GM10248 (cell line): ENCODE measurements at regions of chr10 and their contacts with region 1.

Region 1: GRCh38 chr10:13987446-13987845 is 343.3 kb downstream of the FRMD4A start:
- DNase-seq: no peak
- CTCF ChIP-seq: no peak

Region 2: DNA sequence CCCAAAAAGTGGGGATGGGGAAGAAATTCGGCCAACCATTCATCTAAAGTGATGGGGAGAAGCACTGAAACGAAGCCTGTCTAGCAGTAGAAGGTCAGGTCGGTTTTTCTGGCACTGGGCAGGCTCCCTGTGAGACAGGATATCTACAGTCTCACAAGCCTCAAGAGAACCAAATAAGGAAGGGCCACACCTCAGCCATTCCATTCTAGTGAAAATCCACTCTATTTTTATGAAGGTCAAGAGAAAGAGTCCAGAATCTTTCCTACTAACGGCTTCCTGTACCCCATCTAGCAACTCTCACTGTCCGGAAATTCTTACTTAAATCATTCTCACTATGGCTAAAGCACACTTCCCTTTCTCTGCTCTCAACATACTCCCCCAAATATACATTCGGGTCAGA is 133.6 kb before region 1 on chr10:
- CTCF ChIA-PET with region 1: no interaction called
- POLR2A ChIA-PET with region 1: no interaction called
- DNase-seq: no peak
- CTCF ChIP-seq: no peak

Region 3: GRCh38 chr10:13971601-13972475 is 15.6 kb before region 1 on chr10:
- CTCF ChIA-PET with region 1: interaction called, 14 read pairs
- POLR2A ChIA-PET with region 1: no interaction called
- DNase-seq: no peak
- CTCF ChIP-seq: no peak

Region 4: GRCh38 chr10:14009371-14010100 is 22.1 kb after region 1 on chr10:
- CTCF ChIA-PET with region 1: no interaction called
- POLR2A ChIA-PET with region 1: no interaction called
- DNase-seq: peak; percentile 28
- CTCF ChIP-seq: no peak

Region 5: DNA sequence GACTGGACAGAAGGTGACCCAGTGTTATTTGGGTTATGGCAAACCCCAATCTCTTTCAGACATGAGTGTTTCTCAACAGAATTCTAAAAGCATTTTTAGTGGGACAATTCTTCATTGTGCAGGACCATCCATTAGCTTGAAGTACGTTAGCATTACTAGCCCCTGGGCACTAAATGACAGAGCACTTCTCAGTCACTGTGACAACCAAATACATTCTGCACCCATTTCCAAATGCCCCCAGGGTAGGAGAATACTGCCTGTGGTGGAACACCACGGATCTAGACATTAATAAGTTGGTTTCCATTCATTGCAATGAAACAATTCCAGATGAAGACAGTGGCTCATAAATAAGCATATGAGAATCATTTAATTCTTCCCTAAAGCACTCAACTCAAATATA is 445.7 kb after region 1 on chr10:
- CTCF ChIA-PET with region 1: no interaction called
- POLR2A ChIA-PET with region 1: no interaction called
- DNase-seq: no peak
- CTCF ChIP-seq: no peak